ENCODE measurements at regions of chrX and their contacts with region 1.

Region 1: DNA sequence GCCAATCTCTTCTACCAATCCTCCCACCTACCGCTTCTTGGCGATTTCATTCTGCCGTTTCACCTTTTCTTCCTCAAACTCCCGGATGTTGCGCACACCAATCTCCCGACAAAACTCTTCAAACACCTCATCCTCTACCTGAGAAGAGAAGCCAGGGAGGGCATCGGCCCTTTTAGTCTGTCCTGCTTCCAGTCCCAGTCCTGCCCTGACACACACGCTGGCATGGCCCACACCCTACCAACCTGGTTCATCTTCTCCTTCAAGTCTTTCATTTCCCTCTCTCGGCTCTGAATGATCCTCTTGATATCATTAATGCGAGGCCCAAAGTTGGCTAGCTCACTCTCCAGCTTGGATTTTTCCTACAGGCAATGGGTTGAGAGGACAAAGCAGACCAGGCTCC is 18.9 kb downstream of the SMC1A start:
- DNase-seq: no peak
- ATAC-seq: no peak
- H3K4me3 ChIP-seq: no peak overlapping the region
- H3K4me3 Mint-ChIP-seq: peak overlapping the region in 1 of 10 donors; percentile 40
- H3K27ac ChIP-seq: no peak overlapping the region
- H3K27ac Mint-ChIP-seq: peak overlapping the region in 2 of 9 donors; percentile 20 to 70
- H3K4me1 ChIP-seq: no peaks in the 10 kb centered on the region
- H3K4me1 Mint-ChIP-seq: no peaks in the 10 kb centered on the region
- H3K27me3 ChIP-seq: no peaks in the 10 kb centered on the region
- H3K27me3 Mint-ChIP-seq: no peaks in the 10 kb centered on the region

Region 2: GRCh38 chrX:53433651-53434639 is 30.4 kb after region 1 on chrX and contains the start of gene HSD17B10:
- CTCF ChIA-PET with region 1: no interaction called
- POLR2A ChIA-PET with region 1: no interaction called
- intact Hi-C with region 1: loop called in 1 of 2 experiments (anchors 5 kb)
- DNase-seq: peak; percentile 70 to 84 (median 81)
- ATAC-seq: peak; percentile 99
- H3K4me3 ChIP-seq: peak within 1 kb of the TSS; percentile 76
- H3K4me3 Mint-ChIP-seq: peak within 1 kb of the TSS; percentile 83 to 99 (median 94)
- H3K27ac ChIP-seq: peak within 1 kb of the TSS; percentile 82
- H3K27ac Mint-ChIP-seq: peak within 1 kb of the TSS; percentile 85 to 99 (median 94)
- H3K4me1 ChIP-seq: peaks cover 0 to 11% of the 10 kb centered on the region in 2 donors
- H3K4me1 Mint-ChIP-seq: peaks cover 8 to 32% (median 15%) of the 10 kb centered on the region in 7 donors
- H3K27me3 ChIP-seq: no peaks in the 10 kb centered on the region
- H3K27me3 Mint-ChIP-seq: no peaks in the 10 kb centered on the region
- total RNA-seq, gene HSD17B10: 23.9 to 116 (median 38.6) TPM

Measured in naive thymus-derived CD4-positive, alpha-beta T cell (primary cell).